ENCODE measurements at regions of chr2 and their contacts with region 1.

Region 1: DNA sequence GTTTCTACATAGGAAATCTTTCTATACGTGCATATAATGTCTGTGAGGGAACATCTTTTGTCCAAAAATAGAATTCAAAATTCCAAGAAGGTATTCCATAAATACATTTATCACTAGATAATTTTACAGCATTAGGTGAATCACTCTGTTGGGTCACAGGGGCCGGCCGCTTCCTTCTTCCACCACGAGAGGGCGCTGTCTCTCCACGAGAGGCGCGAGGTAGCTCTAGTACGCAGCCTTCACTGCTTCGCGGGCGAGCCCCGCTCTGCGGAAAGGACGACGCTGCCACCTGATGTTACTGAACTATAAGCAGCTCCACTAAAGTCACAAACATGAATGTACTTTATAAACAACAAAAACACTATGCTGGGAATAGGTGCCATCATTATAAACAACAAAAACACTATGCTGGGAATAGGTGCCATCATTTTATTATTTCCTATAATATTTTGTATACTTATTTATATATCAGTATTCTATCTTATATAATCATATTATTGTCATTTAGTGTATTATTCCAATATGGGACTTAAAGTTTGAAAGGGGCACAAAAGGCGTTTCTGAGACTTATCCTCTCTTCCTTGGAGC is 69.4 kb upstream of the REV1 start:
- DNase-seq: peak; percentile 67 to 77 (median 74)
- H3K4me3 ChIP-seq: no peak overlapping the region
- H3K4me3 Mint-ChIP-seq: peak overlapping the region; percentile 48 to 85
- H3K27ac ChIP-seq: no peak overlapping the region
- H3K27ac Mint-ChIP-seq: peak overlapping the region in 1 of 7 donors; percentile 65
- H3K4me1 ChIP-seq: peaks cover 23 to 26% of the 10 kb centered on the region in 2 donors
- H3K4me1 Mint-ChIP-seq: peaks cover 28% of the 10 kb centered on the region
- H3K27me3 ChIP-seq: no peaks in the 10 kb centered on the region
- H3K27me3 Mint-ChIP-seq: peaks cover 0 to 2% (median 0%) of the 10 kb centered on the region in 3 donors
- CTCF ChIP-seq: peak; percentile 98

Region 2: GRCh38 chr2:99710721-99711120 is 151.6 kb after region 1 on chr2:
- intact Hi-C with region 1: no loop called
- DNase-seq: no peak
- H3K4me3 ChIP-seq: no peak overlapping the region
- H3K4me3 Mint-ChIP-seq: no peak overlapping the region
- H3K27ac ChIP-seq: no peak overlapping the region
- H3K27ac Mint-ChIP-seq: no peak overlapping the region
- H3K4me1 ChIP-seq: no peaks in the 10 kb centered on the region
- H3K4me1 Mint-ChIP-seq: peaks cover 7% of the 10 kb centered on the region
- H3K27me3 ChIP-seq: no peaks in the 10 kb centered on the region
- H3K27me3 Mint-ChIP-seq: no peaks in the 10 kb centered on the region
- CTCF ChIP-seq: no peak

Region 3: DNA sequence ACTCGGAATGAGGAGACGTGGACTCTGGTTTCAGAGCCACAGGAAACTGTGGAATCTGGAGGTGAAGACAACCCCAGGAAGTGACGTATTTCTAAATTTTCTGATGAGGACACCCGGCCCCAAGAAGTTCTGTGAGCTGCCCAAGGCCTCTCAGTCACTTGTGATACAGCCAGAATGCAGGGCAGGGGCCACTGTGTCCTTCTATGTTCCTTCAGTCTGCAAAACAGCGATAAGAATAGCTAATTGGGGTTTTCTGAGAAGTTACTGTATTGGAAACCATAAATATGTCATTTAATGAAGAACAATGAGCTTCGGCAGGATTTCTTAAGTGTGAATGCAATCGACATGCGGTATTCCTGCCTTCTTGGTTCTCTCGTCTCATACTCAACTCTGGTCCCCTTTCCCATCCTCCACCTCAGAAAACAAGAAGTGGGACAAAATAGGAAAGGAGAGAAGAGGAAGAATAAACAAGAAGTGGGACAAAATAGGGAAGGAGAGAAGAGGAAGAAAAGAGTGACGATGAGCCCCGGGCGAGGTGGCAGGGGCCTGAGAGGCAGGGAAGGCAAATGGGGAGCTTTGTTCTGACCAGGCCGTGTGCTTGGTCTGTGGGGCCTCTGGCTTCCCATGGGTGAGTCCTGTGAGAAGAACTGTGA is 212.6 kb after region 1 on chr2:
- intact Hi-C with region 1: loop called in 1 of 2 experiments (anchors 10 kb)
- DNase-seq: peak; percentile 69 to 86 (median 84)
- H3K4me3 ChIP-seq: peak overlapping the region in 1 of 3 experiments; percentile 50
- H3K4me3 Mint-ChIP-seq: peak overlapping the region; percentile 42 to 69
- H3K27ac ChIP-seq: peak overlapping the region; percentile 83 to 92
- H3K27ac Mint-ChIP-seq: peak overlapping the region; percentile 95 to 98 (median 96)
- H3K4me1 ChIP-seq: peaks cover 81 to 88% of the 10 kb centered on the region in 2 donors
- H3K4me1 Mint-ChIP-seq: peaks cover 93% of the 10 kb centered on the region
- H3K27me3 ChIP-seq: no peaks in the 10 kb centered on the region
- H3K27me3 Mint-ChIP-seq: no peaks in the 10 kb centered on the region
- CTCF ChIP-seq: no peak

Region 4: GRCh38 chr2:100242891-100243619 is 683.9 kb after region 1 on chr2:
- intact Hi-C with region 1: loop called (anchors 5 kb)
- DNase-seq: peak; percentile 38 to 51 (median 45)
- H3K4me3 ChIP-seq: peak overlapping the region in 1 of 3 experiments; percentile 46
- H3K4me3 Mint-ChIP-seq: peak overlapping the region; percentile 20 to 75
- H3K27ac ChIP-seq: peak overlapping the region; percentile 79 to 83
- H3K27ac Mint-ChIP-seq: peak overlapping the region; percentile 68 to 92 (median 88)
- H3K4me1 ChIP-seq: peaks cover 36 to 43% of the 10 kb centered on the region in 2 donors
- H3K4me1 Mint-ChIP-seq: peaks cover 41% of the 10 kb centered on the region
- H3K27me3 ChIP-seq: no peaks in the 10 kb centered on the region
- H3K27me3 Mint-ChIP-seq: peaks cover 0 to 4% (median 0%) of the 10 kb centered on the region in 3 donors
- CTCF ChIP-seq: peak; percentile 87

Region 5: GRCh38 chr2:100262555-100263320 is 703.6 kb after region 1 on chr2:
- intact Hi-C with region 1: loop called in 1 of 2 experiments (anchors 5 kb)
- DNase-seq: peak; percentile 36 to 57 (median 55)
- H3K4me3 ChIP-seq: peak overlapping the region in 1 of 3 experiments; percentile 30
- H3K4me3 Mint-ChIP-seq: no peak overlapping the region
- H3K27ac ChIP-seq: no peak overlapping the region
- H3K27ac Mint-ChIP-seq: peak overlapping the region in 1 of 7 donors; percentile 2
- H3K4me1 ChIP-seq: peaks cover 22 to 23% of the 10 kb centered on the region in 2 donors
- H3K4me1 Mint-ChIP-seq: peaks cover 25% of the 10 kb centered on the region
- H3K27me3 ChIP-seq: no peaks in the 10 kb centered on the region
- H3K27me3 Mint-ChIP-seq: peaks cover 0 to 3% (median 2%) of the 10 kb centered on the region in 3 donors
- CTCF ChIP-seq: peak; percentile 99

Region 6: DNA sequence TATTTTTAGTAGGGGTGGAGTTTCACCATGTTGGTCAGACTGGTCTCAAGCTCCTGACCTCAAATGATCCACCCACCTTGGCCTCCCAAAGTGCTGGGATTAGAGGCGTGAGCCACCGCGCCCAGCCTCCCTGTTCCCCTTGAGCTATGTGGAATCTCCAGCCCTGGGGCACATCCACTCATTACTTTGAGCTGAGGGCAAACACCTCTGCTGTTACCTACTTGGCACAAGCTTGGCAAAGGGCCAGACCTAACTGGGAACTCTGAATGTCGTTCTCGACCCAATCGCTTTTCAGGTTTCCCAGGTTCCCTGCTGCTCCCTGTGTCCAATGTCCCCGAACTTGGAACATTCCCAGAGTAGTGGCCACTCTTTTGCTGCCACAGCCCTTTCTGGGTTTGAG is 817.7 kb after region 1 on chr2:
- intact Hi-C with region 1: loop called in 1 of 2 experiments (anchors 10 kb)
- DNase-seq: no peak
- H3K4me3 ChIP-seq: no peak overlapping the region
- H3K4me3 Mint-ChIP-seq: no peak overlapping the region
- H3K27ac ChIP-seq: no peak overlapping the region
- H3K27ac Mint-ChIP-seq: no peak overlapping the region
- H3K4me1 ChIP-seq: peaks cover 0 to 4% of the 10 kb centered on the region in 2 donors
- H3K4me1 Mint-ChIP-seq: peaks cover 9% of the 10 kb centered on the region
- H3K27me3 ChIP-seq: peaks cover 0 to 3% of the 10 kb centered on the region in 2 donors
- H3K27me3 Mint-ChIP-seq: peaks cover 0 to 6% (median 3%) of the 10 kb centered on the region in 3 donors
- CTCF ChIP-seq: no peak

Region 7: DNA sequence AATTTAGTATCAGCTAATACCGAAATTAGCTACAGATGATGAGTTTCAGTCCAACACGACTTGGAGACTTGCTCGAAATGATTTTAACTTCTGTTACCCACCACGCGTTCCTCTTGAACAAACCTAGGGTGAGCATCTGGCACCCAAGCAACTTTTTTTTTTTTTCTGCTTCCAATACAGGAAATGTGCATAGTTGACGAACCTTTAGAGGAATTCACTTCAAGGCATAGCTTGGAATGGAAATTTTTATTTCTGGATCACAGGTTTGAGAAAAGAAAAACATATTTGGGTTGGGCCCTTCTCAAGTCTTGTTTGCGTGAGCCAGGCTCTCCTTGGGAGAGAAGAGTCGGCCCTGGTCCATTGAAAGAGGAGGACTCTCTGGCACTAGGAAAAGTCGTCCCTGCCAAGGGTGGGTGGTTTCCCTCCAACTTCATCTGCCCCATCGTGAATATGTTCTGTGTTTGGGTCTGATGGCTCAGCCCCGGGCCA is 1405.6 kb after region 1 on chr2:
- intact Hi-C with region 1: no loop called
- DNase-seq: no peak
- H3K4me3 ChIP-seq: no peak overlapping the region
- H3K4me3 Mint-ChIP-seq: no peak overlapping the region
- H3K27ac ChIP-seq: no peak overlapping the region
- H3K27ac Mint-ChIP-seq: no peak overlapping the region
- H3K4me1 ChIP-seq: no peaks in the 10 kb centered on the region
- H3K4me1 Mint-ChIP-seq: no peaks in the 10 kb centered on the region
- H3K27me3 ChIP-seq: no peaks in the 10 kb centered on the region
- H3K27me3 Mint-ChIP-seq: peaks cover 2 to 9% (median 5%) of the 10 kb centered on the region in 3 donors
- CTCF ChIP-seq: no peak

Region 8: GRCh38 chr2:100984892-100985379 is 1425.8 kb after region 1 on chr2:
- intact Hi-C with region 1: loop called in 1 of 2 experiments (anchors 10 kb)
- DNase-seq: peak; percentile 49 to 70 (median 59)
- H3K4me3 ChIP-seq: no peak overlapping the region
- H3K4me3 Mint-ChIP-seq: peak overlapping the region in 1 of 2 donors; percentile 40
- H3K27ac ChIP-seq: no peak overlapping the region
- H3K27ac Mint-ChIP-seq: no peak overlapping the region
- H3K4me1 ChIP-seq: no peaks in the 10 kb centered on the region
- H3K4me1 Mint-ChIP-seq: no peaks in the 10 kb centered on the region
- H3K27me3 ChIP-seq: no peaks in the 10 kb centered on the region
- H3K27me3 Mint-ChIP-seq: peaks cover 3 to 7% (median 3%) of the 10 kb centered on the region in 3 donors
- CTCF ChIP-seq: peak; percentile 92

Measured in CD14-positive monocyte (primary cell).